ENCODE measurements at regions of chr4 and their contacts with region 1.

Region 1: DNA sequence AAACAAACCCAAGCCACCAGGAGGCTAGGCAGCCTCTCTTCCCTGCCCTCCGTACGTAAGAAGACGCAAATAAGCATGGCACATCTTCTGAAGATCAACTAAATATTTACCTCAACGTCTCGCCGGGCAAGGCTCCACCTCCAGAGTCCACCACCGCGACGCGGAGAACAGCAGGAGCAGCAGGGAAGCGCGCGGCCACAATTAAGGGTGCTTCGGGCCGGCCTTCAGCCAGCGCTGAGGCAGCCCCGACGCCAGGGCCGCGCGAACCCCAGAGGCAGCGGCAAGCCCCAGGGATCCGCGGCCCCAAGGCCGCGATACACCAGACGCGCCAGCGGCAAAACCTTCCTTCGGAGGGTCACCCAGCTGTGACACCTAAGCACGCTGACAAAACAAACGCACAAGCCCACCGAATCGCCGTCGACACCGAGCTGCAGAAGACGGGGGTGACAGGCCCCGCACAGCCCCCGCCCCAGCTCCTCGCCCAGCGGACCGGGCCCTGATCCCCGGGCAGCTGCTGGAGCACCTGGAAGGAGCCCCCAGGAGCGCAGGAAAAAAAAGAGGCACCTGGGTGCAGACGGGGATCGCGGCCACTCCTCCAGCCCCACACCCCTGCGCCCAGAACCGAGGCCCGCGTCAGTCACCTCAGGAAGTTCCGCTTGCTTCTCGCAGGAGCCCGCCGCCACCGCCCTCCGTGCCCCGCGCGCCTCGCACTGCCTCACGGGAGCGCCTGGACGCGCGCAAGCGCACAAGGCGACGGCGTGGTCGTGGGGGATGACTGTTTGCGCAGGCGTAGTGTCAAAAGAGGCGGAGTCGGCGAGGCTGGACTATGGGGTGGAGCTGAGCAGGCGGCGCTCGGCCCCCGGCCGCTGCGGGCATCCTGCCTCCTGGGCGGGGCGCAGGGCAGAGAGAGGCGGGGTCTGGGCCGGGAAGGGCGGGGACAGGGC is at the starts of genes HAUS3 and POLN:
- DNase-seq: peak; percentile 100
- H3K4me3 Mint-ChIP-seq: peak within 1 kb of the TSS; percentile 91
- H3K27ac Mint-ChIP-seq: peak within 1 kb of the TSS; percentile 80
- H3K4me1 Mint-ChIP-seq: peaks cover 49% of the 10 kb centered on the region
- H3K27me3 Mint-ChIP-seq: peaks cover 3% of the 10 kb centered on the region
- total RNA-seq, gene HAUS3: 17.1 and 18.6 TPM in 2 replicates
- total RNA-seq, gene POLN: 1.3 and 1.4 TPM in 2 replicates

Region 2: GRCh38 chr4:1721004-1721665 is 520.5 kb before region 1 on chr4 and contains the starts of genes TACC3 and TMEM129:
- intact Hi-C with region 1: loop called (anchors 2 kb)
- DNase-seq: peak; percentile 92
- H3K4me3 Mint-ChIP-seq: peak within 1 kb of the TSS; percentile 97
- H3K27ac Mint-ChIP-seq: peak within 1 kb of the TSS; percentile 99
- H3K4me1 Mint-ChIP-seq: peaks cover 36% of the 10 kb centered on the region
- H3K27me3 Mint-ChIP-seq: no peaks in the 10 kb centered on the region
- total RNA-seq, gene TACC3: 137 and 141 TPM in 2 replicates
- total RNA-seq, gene TMEM129: 23.5 and 27.1 TPM in 2 replicates

Region 3: DNA sequence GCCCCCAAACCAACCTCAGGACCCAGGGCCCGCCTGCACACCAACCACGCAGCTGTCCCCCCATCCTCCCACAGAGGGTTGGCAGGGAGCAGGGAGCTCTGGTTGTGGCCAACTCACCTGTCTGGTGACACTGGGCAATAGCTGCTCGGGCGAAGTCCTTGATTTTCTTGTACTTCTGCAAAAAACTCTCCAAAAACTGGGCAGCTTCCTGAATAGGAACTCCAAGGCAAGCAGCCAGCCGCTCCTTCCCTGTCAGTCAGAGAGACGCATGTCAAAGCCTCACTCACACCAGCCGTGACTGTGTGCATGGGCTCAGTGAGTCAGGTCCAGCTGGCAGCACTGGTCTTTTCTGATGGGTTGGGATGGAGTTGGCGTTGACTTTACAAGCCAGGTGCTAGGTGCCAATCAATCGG is 156.2 kb before region 1 on chr4:
- intact Hi-C with region 1: no loop called
- DNase-seq: no peak
- H3K4me3 Mint-ChIP-seq: no peak overlapping the region
- H3K27ac Mint-ChIP-seq: no peak overlapping the region
- H3K4me1 Mint-ChIP-seq: no peaks in the 10 kb centered on the region
- H3K27me3 Mint-ChIP-seq: peaks cover 14% of the 10 kb centered on the region

Region 4: GRCh38 chr4:2105559-2105958 is 136.1 kb before region 1 on chr4:
- intact Hi-C with region 1: no loop called
- DNase-seq: no peak
- H3K4me3 Mint-ChIP-seq: no peak overlapping the region
- H3K27ac Mint-ChIP-seq: no peak overlapping the region
- H3K4me1 Mint-ChIP-seq: peaks cover 2% of the 10 kb centered on the region
- H3K27me3 Mint-ChIP-seq: peaks cover 9% of the 10 kb centered on the region

Region 5: GRCh38 chr4:2168469-2169319 is 73.0 kb before region 1 on chr4:
- intact Hi-C with region 1: no loop called
- DNase-seq: no peak
- H3K4me3 Mint-ChIP-seq: no peak overlapping the region
- H3K27ac Mint-ChIP-seq: no peak overlapping the region
- H3K4me1 Mint-ChIP-seq: peaks cover 37% of the 10 kb centered on the region
- H3K27me3 Mint-ChIP-seq: no peaks in the 10 kb centered on the region

Region 6: GRCh38 chr4:2412885-2413716 is 171.4 kb after region 1 on chr4:
- intact Hi-C with region 1: loop called (anchors 1 kb)
- DNase-seq: peak; percentile 91
- H3K4me3 Mint-ChIP-seq: peak overlapping the region; percentile 74
- H3K27ac Mint-ChIP-seq: peak overlapping the region; percentile 96
- H3K4me1 Mint-ChIP-seq: peaks cover 57% of the 10 kb centered on the region
- H3K27me3 Mint-ChIP-seq: peaks cover 14% of the 10 kb centered on the region

Region 7: DNA sequence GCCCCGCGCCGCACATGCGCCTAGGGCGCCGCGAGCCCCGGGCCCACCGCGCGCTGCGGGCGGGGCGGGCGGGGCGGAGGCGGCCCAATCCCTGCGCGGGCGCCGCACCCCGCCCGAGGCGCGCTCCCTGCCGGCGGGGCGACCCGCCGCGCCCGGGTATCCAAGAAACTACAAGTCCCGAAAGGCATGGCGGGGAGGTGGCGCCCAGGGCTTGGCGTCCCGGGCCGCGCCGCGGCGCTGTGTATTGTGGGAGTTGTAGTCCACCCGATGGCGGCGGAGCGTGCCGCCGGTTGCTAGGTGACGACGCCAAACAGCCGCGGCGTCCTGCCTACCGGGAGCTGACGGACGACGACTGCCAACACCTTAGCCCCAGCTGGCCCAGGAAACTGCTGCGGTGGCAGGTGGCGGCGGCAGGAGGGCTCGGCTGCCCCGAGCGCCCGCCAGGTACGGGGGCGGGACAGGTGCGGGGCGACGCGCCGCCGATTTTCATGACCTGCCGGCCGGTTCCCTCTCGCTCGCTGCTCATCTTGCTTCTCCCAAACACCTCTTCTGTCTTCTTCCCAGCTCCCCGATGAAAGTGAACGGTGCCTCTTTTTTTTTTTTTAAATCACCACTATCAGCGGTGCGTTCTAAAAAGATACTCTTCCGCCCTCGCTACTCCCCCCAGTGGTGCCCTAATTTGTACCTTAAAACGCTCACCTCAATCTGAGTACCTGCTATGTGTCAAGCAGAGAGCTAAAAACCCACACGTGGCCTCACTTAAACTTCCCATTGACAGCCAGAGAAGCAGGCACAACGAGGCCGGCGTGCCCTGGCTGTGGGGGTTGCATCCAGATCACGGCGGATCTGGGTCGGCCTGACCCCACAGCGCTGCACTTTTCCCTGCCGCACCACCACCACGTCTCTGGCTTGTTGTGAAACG is 177.2 kb after region 1 on chr4 and contains the start of gene CFAP99:
- intact Hi-C with region 1: loop called (anchors 1 kb)
- DNase-seq: peak; percentile 94
- H3K4me3 Mint-ChIP-seq: peak within 1 kb of the TSS; percentile 88
- H3K27ac Mint-ChIP-seq: peak within 1 kb of the TSS; percentile 15
- H3K4me1 Mint-ChIP-seq: peaks cover 31% of the 10 kb centered on the region
- H3K27me3 Mint-ChIP-seq: peaks cover 48% of the 10 kb centered on the region
- total RNA-seq, gene CFAP99: not detected in 2 replicates

Region 8: DNA sequence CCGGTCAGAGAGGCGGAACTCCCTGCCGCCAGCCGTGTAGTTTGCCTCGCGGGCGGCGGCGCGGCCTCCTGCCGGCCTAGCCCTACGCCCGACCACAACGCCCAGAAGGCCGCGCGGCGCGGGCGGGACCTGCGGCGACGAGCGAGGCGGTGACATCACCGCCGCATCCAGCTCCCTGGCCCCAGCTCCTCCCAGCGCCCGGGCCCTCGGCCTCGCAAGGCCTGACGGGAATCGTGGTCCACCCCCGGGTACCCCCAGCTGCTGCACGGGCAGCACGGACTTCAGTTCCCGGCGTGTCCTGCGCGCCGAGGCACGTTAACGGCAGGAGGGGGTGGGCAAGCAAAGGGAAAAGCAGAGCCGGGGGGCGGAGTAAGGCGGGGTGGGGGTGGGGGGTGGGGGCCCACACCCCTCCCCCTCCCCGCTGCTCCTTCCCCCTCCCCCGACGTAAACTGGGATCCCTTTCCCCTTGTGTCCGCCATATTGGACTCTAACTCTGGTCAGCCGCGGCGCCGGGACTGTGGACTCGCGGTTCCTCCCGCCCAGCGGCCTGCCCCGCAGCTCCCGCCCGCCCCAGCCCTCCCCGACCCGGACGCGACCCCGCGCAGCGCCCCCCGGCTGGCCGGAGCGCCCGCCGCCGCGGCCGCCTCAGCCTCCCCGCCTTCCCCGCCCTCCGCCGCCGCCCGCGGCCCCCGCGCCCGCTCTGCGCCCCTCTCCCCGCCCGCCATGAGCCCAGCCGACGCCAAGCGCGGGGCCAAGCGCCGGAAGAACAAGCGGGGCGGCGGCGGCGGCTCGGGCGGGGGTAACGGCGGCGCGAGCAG is 294.7 kb after region 1 on chr4 and contains the start of gene FAM193A:
- intact Hi-C with region 1: loop called (anchors 1 kb)
- DNase-seq: peak; percentile 99
- H3K4me3 Mint-ChIP-seq: peak within 1 kb of the TSS; percentile 90
- H3K27ac Mint-ChIP-seq: peak within 1 kb of the TSS; percentile 93
- H3K4me1 Mint-ChIP-seq: peaks cover 10% of the 10 kb centered on the region
- H3K27me3 Mint-ChIP-seq: no peaks in the 10 kb centered on the region
- total RNA-seq, gene FAM193A: 30.8 and 31.2 TPM in 2 replicates